ENCODE measurements at regions of chr2 and their contacts with region 1.

Region 1: DNA sequence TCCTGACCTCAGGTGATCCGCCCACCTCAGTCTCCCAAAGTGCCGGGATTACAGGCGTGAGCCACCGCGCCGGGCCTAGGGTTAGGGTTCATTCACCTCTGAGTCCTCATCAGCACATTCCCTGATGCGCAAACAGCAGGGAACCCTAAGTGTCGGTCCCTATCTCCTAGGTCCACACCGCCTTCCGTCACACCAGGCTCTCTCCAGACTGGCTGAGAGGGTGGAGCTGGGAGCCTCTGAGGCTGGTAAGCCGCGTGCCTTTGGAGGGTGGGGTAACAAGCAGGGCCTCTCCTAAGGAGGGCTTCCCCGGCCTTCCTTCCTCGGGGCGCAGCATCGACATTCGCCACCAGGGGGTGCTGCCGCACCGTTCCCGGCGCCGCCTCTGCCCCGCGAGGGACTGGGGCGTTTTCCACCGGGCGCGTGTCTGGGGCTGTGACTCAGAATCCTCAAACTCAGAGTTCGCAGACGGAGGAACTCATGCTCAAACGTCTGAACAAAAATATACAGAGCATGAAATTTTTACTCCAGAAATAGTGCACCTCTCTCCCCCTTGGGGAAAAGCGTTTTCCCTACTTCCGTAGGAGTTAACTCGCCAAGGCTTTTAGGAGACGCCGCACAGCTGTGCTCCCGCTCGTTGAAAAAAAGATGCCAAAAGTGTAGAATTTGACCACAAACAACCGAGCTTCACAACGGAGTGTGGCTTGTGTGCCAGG is 63.9 kb upstream of the ASAP2 start:
- DNase-seq: peak; percentile 86
- H3K4me3 ChIP-seq: peak overlapping the region; percentile 50
- H3K27ac ChIP-seq: peak overlapping the region; percentile 63
- H3K4me1 ChIP-seq: peaks cover 13% of the 10 kb centered on the region
- H3K27me3 ChIP-seq: peaks cover 12% of the 10 kb centered on the region
- CTCF ChIP-seq: peak; percentile 100

Region 2: DNA sequence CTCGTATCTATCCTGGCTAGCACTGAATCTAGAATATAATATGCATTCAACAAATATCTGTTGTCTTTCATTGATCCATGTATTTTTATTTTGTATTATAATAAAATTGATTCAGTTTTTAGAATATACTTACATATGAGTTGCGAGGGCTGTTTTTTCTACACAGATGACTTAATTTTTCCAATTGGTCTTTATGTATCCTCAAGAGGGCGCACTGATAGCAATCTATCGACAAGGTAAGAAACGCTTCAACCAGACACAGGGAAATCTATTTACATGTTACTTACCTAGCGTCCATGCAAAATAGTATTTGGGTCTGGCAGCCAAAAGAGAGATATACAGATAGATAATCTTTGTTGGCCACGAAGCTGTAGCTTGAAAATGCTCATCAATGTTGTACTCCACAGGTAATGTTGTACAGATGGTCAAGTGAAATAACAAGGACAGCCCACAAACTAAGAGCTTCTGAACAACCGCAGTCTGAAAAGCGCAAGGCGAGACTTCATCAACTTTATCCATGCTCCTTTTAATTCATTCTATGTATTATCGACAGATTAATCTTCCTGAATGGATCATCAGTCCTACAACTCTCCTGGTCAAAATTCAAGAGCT is 269.8 kb before region 1 on chr2:
- intact Hi-C with region 1: loop called (anchors 10 kb)
- DNase-seq: no peak
- H3K4me3 ChIP-seq: no peak overlapping the region
- H3K27ac ChIP-seq: no peak overlapping the region
- H3K4me1 ChIP-seq: no peaks in the 10 kb centered on the region
- H3K27me3 ChIP-seq: no peaks in the 10 kb centered on the region
- CTCF ChIP-seq: peak; percentile 61

Region 3: GRCh38 chr2:9205963-9206948 is 63.5 kb after region 1 on chr2 and contains the start of gene ASAP2:
- intact Hi-C with region 1: loop called (anchors 10 kb)
- DNase-seq: peak; percentile 73
- H3K4me3 ChIP-seq: peak within 1 kb of the TSS; percentile 93
- H3K27ac ChIP-seq: peak within 1 kb of the TSS; percentile 92
- H3K4me1 ChIP-seq: peaks cover 48% of the 10 kb centered on the region
- H3K27me3 ChIP-seq: no peaks in the 10 kb centered on the region
- CTCF ChIP-seq: peak; percentile 90
- total RNA-seq, gene ASAP2: 10.0 TPM

Region 4: GRCh38 chr2:9333591-9334171 is 191.0 kb after region 1 on chr2:
- intact Hi-C with region 1: loop called (anchors 2 kb)
- DNase-seq: peak; percentile 29
- H3K4me3 ChIP-seq: no peak overlapping the region
- H3K27ac ChIP-seq: peak overlapping the region; percentile 37
- H3K4me1 ChIP-seq: peaks cover 54% of the 10 kb centered on the region
- H3K27me3 ChIP-seq: no peaks in the 10 kb centered on the region
- CTCF ChIP-seq: peak; percentile 80

Measured in left ventricle myocardium inferior (tissue), 1 donor.